H1 (cell line): ENCODE measurements at regions of chr18 and their contacts with region 1.

Region 1: DNA sequence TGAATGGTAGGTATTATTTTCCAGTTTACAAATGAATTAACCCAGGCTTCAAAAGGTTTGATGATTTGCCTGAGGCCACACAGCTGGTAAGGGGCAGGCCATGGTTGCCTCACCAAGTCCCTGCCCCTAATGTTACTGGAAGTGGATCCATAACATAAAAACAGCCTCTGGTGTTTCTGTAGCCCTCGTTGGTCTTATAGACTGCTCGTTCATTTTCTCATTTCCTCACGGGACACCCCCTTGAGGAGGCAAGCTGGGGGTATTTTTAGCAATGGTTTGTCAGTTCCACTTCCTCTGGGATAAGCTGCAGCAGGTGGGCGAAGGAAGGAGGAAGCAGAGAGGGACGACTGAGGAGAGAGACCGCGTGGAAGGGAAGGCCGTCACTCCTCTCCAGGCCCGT is 32.9 kb upstream of the NDUFV2 start:
- DNase-seq: no peak
- H3K4me3 ChIP-seq: no peak overlapping the region
- H3K27ac ChIP-seq: no peak overlapping the region
- H3K4me1 ChIP-seq: no peaks in the 10 kb centered on the region
- H3K27me3 ChIP-seq: no peaks in the 10 kb centered on the region
- CTCF ChIP-seq: no peak
- EP300 ChIP-seq: no peak
- POLR2A ChIP-seq: no peak
- RAD21 ChIP-seq: no peak

Region 2: DNA sequence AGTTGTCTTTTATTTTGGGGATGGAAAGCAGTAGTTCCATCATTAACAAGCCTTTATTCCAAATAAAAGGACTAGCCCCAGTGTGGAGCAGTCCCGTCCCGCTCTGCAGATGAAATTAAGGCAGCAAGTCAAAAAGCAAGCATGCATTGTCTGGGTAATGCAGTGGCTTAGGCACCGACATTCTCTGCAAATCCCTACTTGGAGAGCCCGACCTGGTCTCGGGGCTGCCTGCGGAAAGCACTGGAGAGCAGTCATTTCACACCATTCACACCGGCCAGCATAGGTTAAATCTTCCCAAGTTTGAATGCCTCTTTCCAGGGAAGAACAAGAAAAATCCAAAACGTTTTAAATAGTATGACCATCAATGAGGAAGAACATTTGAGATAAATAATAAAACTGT is 484.8 kb before region 1 on chr18:
- CTCF ChIA-PET with region 1: no interaction called
- POLR2A ChIA-PET with region 1: no interaction called
- DNase-seq: no peak
- H3K4me3 ChIP-seq: no peak overlapping the region
- H3K27ac ChIP-seq: no peak overlapping the region
- H3K4me1 ChIP-seq: peaks cover 0 to 2% (median 0%) of the 10 kb centered on the region in 4 experiments; a peak in 1 of 7 replicates
- H3K27me3 ChIP-seq: no peaks in the 10 kb centered on the region; a peak in 1 of 7 replicates
- CTCF ChIP-seq: no peak
- EP300 ChIP-seq: no peak
- POLR2A ChIP-seq: no peak
- RAD21 ChIP-seq: no peak

Region 3: DNA sequence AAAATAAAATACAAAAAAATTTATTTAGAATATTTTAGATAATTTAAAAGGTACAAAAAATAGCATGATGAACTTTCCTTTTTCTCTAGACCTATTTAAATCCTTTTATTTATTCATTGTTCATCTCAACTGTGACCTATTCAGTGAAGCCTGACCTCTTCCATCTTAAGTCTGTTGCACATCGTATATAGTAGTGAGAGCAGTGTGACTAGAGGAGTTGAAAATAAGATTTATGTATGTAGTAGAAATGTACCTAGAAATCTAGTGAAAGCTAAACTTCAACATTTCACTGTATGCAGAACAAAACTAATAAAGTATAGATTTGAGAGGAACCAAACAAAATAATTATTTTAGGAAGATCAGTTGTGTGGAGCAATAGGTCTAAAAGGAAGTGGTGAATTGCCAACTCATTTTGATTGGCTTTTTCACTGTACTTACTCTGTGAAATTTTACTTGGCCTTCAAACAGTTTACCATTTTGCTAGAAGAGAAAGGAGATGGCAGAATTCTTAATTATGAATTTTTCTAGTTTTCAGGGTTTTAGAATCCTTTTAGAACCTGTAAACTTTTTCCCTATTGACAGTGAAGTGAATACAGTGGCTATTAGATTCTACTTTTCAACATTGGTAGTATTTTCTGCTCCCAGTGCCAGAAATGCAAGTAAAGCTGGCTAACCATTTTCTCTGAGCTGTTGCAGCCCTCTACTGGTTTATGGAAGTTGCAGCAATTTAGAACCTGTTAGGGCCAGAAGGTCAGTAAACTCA is 78.0 kb after region 1 on chr18:
- CTCF ChIA-PET with region 1: interaction called, 14 read pairs
- POLR2A ChIA-PET with region 1: no interaction called
- DNase-seq: no peak
- H3K4me3 ChIP-seq: no peak overlapping the region
- H3K27ac ChIP-seq: no peak overlapping the region
- H3K4me1 ChIP-seq: peaks cover 0 to 5% (median 0%) of the 10 kb centered on the region in 4 experiments; a peak in 1 of 7 replicates
- H3K27me3 ChIP-seq: no peaks in the 10 kb centered on the region
- CTCF ChIP-seq: peak in 2 of 3 experiments; percentile 58 to 73; a peak in 3 of 4 replicates
- EP300 ChIP-seq: no peak
- POLR2A ChIP-seq: no peak
- RAD21 ChIP-seq: peak; percentile 81 to 86